CD4-positive, alpha-beta T cell (primary cell): ENCODE measurements at regions of chr17 and their contacts with region 1.

Region 1: DNA sequence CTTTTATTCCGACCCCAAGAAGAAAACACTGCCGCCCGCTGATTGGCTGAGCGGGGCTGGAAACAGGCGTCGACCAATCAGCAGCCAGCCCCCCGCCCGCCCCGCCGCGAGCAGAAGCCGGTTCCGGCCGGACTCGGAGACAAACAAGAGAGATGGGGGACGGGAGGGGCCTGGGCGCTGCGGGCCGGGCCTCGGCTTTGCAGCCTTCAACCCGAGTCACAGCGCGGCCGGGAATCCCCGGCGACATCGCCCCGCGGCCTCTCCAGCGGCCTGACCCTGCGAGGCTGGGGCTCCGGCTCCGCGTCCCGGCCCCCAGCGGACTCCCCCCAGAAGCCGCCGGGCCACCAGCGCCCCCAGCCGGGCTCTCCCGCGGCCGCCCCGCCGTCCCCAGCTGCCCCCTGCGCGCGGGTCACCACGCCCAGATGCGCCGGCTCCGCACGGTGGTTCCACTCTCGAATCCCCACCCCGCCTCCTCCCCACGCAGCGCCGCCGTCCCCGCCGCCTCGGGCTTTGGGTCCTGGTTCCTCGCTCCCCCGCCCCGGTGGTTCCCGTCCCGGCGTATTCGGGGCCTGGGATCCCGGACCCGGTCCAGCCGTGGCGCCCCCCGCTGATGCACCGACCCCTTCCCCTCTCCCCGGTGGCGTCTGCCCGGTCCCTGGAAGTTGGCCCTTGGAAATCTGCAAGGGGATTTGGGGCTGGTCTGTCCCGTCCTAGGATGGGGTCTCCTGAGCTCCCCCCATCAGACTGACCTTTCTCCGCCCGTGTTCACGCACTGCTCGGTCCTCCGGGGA is 417 bp upstream of the SLC43A2 start:
- DNase-seq: peak; percentile 76 to 94 (median 87)
- ATAC-seq: peak; percentile 75
- H3K4me3 ChIP-seq: peak overlapping the region; percentile 76
- H3K4me3 Mint-ChIP-seq: peak overlapping the region; percentile 96
- H3K27ac ChIP-seq: peak overlapping the region in 1 of 2 donors; percentile 46
- H3K27ac Mint-ChIP-seq: peak overlapping the region; percentile 77
- H3K4me1 ChIP-seq: peaks cover 34% of the 10 kb centered on the region
- H3K4me1 Mint-ChIP-seq: peaks cover 23% of the 10 kb centered on the region
- H3K27me3 ChIP-seq: peaks cover 0 to 5% of the 10 kb centered on the region in 2 experiments
- H3K27me3 Mint-ChIP-seq: no peaks in the 10 kb centered on the region
- CTCF ChIP-seq: no peak

Region 2: GRCh38 chr17:1275962-1276736 is 352.9 kb before region 1 on chr17:
- CTCF ChIA-PET with region 1: no interaction called
- POLR2A ChIA-PET with region 1: no interaction called
- intact Hi-C with region 1: loop called in 1 of 2 experiments (anchors 5 kb)
- DNase-seq: peak; percentile 58 to 86 (median 70)
- ATAC-seq: peak; percentile 76
- H3K4me3 ChIP-seq: no peak overlapping the region
- H3K4me3 Mint-ChIP-seq: no peak overlapping the region
- H3K27ac ChIP-seq: no peak overlapping the region
- H3K27ac Mint-ChIP-seq: no peak overlapping the region
- H3K4me1 ChIP-seq: peaks cover 8% of the 10 kb centered on the region
- H3K4me1 Mint-ChIP-seq: no peaks in the 10 kb centered on the region
- H3K27me3 ChIP-seq: peaks cover 13 to 15% of the 10 kb centered on the region in 2 experiments
- H3K27me3 Mint-ChIP-seq: peaks cover 35% of the 10 kb centered on the region
- CTCF ChIP-seq: peak; percentile 85

Region 3: DNA sequence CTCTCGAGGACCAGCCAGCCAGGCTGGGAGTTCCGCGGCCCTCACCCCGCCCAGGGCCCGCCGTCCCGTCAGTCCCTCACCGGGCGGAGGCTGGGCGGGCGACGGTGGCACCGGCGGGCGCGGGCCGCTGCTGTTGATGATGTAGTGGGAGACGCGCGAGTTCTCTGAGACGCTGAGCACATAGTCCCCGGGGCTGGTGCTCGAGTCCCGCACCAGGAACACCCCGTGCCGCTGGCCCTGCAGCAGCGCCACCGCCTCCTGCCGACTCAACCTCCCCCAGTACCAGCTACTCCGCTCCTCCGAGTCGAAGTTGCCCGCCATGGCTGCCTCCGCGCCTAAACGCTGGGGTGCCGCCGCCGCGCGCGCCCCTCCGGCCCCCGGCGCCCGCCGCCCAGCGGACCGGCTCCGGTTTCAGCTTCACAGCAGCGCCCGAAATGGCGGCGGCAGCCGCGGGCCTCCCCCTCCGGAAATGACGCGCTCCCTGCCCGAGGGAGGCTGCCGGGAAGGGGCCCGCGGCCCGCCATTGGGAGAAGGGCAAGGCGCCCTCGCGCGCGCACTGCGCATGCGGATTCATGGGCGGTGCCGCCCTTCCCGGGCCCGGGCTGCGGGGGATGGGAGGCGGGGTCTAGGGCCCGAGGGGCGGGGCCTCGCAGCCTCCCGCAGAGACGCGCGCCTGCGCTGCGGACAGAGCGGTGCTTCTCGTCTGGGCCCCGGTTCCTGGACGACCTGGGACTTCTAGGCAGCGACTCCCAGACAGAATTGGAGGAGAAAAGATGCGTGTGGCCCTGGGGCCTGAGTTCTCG is 173.1 kb before region 1 on chr17 and contains the start of gene CRK:
- CTCF ChIA-PET with region 1: no interaction called
- POLR2A ChIA-PET with region 1: interaction called, 3 read pairs
- intact Hi-C with region 1: loop called in 1 of 2 experiments (anchors 10 kb)
- DNase-seq: peak; percentile 95 to 99 (median 99)
- ATAC-seq: peak; percentile 91
- H3K4me3 ChIP-seq: peak within 1 kb of the TSS; percentile 80
- H3K4me3 Mint-ChIP-seq: peak within 1 kb of the TSS; percentile 96
- H3K27ac ChIP-seq: peak within 1 kb of the TSS; percentile 88 to 91
- H3K27ac Mint-ChIP-seq: peak within 1 kb of the TSS; percentile 81
- H3K4me1 ChIP-seq: peaks cover 54% of the 10 kb centered on the region
- H3K4me1 Mint-ChIP-seq: peaks cover 51% of the 10 kb centered on the region
- H3K27me3 ChIP-seq: no peaks in the 10 kb centered on the region
- H3K27me3 Mint-ChIP-seq: no peaks in the 10 kb centered on the region
- CTCF ChIP-seq: no peak
- total RNA-seq, gene CRK: 13.6 to 14.5 TPM

Region 4: GRCh38 chr17:1509290-1509881 is 119.7 kb before region 1 on chr17:
- CTCF ChIA-PET with region 1: no interaction called
- POLR2A ChIA-PET with region 1: no interaction called
- intact Hi-C with region 1: no loop called
- DNase-seq: no peak
- ATAC-seq: no peak
- H3K4me3 ChIP-seq: no peak overlapping the region
- H3K4me3 Mint-ChIP-seq: no peak overlapping the region
- H3K27ac ChIP-seq: no peak overlapping the region
- H3K27ac Mint-ChIP-seq: no peak overlapping the region
- H3K4me1 ChIP-seq: peaks cover 16% of the 10 kb centered on the region
- H3K4me1 Mint-ChIP-seq: peaks cover 15% of the 10 kb centered on the region
- H3K27me3 ChIP-seq: no peaks in the 10 kb centered on the region
- H3K27me3 Mint-ChIP-seq: no peaks in the 10 kb centered on the region
- CTCF ChIP-seq: no peak

Region 5: DNA sequence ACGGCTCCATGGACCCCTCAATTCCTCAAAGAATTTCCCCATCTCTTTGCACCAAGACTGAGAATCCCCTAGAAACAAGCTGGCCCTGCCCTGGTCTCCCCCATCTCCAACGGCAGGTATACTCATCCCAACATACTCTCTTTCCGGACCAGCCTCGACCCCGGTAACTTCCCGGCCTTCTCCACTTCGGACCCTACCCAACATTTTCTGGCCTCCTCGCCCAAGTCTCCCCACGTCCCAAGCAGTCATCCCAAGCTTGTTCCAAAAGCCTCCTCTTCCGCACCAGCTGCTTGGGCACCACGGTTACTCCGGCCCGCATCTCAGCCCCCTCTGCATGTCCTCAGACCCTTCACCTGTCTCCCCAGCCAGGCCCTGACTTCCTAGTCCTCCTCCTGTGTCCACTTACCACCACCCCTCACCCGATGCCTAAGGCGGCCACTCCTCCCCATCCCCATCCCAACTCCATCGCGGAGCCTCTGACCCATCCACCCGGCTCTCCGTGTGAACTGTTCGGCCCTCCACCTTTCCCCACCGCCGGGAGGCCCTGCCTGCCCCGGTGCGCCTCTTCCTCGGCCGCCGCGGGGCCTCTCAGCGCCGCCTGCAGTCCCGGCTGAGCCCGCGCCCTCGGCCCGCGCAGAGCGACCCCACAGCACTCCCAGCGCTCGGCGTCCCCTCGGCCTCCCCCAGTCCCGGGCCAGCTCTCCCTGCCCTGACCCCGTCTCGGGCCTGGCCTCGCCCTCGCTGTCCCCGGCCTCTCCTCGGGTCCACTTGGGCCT is 67.5 kb before region 1 on chr17:
- CTCF ChIA-PET with region 1: interaction called, 3 read pairs
- POLR2A ChIA-PET with region 1: interaction called, 4 read pairs
- intact Hi-C with region 1: loop called (anchors 2 to 10 kb)
- DNase-seq: peak in 11 of 14 experiments; percentile 14 to 68 (median 33)
- ATAC-seq: peak; percentile 40
- H3K4me3 ChIP-seq: peak overlapping the region; percentile 51
- H3K4me3 Mint-ChIP-seq: peak overlapping the region; percentile 88
- H3K27ac ChIP-seq: no peak overlapping the region
- H3K27ac Mint-ChIP-seq: peak overlapping the region; percentile 65
- H3K4me1 ChIP-seq: peaks cover 41% of the 10 kb centered on the region
- H3K4me1 Mint-ChIP-seq: peaks cover 37% of the 10 kb centered on the region
- H3K27me3 ChIP-seq: no peaks in the 10 kb centered on the region
- H3K27me3 Mint-ChIP-seq: no peaks in the 10 kb centered on the region
- CTCF ChIP-seq: peak; percentile 23

Region 6: DNA sequence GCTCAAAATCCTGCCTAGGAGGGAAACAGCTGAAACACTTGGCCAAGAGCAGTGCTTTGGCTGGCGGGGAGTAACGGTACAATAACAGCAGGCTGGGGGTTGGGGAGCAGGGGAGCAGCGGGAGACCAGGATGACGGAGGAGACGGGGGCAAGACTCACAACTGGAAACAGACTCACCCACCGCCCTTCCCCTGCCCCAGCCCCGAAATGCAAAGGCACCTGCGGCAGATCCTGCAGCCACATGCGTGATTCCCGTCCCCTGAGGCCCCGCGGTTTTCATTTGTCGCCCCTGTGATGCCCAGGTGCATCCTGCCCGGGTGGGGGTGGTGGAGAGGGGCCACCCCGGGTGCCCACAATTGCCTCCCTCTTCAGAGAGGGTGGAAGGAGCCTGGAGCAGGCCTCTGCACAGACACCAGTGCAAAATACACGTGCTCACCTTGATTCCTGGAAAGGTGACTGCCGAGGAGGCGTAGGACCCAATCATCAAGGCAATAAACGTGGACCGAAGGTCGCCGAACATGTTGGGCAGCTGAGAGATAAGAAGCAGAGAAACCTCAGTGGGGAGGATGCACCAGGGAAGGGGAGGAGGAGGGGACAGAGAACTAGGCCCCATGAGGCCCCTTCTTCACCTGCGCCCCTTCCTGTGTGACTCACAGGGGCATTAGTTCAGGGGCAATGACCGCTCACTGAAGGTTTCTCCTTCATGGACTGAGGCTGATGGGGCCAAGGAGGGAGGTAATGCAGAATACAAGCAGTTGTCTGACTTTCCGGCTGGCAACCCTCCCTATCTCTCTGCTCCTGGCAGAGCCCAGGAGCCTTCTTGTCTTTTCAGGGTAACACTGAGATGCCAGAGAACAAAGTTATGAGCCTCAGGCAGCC is 36.1 kb before region 1 on chr17:
- CTCF ChIA-PET with region 1: no interaction called
- POLR2A ChIA-PET with region 1: no interaction called
- intact Hi-C with region 1: no loop called
- DNase-seq: peak in 1 of 14 experiments; percentile 25
- ATAC-seq: no peak
- H3K4me3 ChIP-seq: no peak overlapping the region
- H3K4me3 Mint-ChIP-seq: no peak overlapping the region
- H3K27ac ChIP-seq: no peak overlapping the region
- H3K27ac Mint-ChIP-seq: no peak overlapping the region
- H3K4me1 ChIP-seq: peaks cover 4% of the 10 kb centered on the region
- H3K4me1 Mint-ChIP-seq: no peaks in the 10 kb centered on the region
- H3K27me3 ChIP-seq: no peaks in the 10 kb centered on the region
- H3K27me3 Mint-ChIP-seq: no peaks in the 10 kb centered on the region
- CTCF ChIP-seq: no peak

Region 7: DNA sequence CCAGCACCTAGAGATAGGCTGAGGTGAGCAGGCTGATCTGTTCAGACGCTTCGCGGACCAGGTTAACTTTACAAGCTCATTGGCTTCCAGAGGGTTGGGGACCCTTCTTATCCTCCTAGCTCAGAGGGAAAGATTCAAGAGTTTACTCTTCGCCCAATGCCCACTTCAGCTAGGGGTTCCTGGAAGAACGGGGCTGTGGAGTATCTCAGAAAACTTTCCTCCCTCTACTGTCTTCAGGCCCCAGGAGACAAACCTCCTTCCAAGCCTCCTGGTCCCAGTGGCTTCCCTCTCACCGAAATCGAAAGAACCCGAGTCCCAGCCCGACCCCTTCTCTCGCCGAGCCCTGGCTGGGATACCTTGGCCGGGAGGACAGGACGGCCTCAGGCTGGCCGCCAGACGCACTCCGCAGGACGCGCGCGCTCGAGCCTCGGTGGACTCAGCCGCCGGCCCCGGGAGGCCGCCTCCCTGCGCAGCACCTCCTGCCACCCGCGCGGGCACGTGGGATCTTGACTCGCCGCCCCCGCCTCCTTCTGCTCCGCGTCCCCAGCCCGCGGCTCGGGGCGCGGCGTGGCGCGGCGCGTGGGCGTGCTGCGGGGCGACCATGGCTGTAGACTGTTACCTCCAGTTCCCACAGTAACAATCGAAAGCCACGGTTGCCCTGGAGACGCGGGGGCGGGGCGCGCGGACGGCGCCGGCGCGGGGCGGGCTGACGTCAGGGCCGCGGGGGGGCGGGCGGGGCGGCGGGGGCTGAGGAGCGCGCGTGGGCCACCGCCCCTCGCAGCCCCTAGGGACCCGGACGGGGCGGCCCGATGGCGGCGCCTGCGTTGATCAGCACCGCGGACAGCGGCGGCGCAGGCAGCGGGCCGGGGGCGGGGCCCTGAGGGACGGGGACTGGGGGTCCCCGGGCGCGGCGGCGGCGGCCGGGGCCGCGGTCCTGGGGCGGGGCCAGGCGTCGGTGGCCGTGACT is 420.6 kb after region 1 on chr17:
- CTCF ChIA-PET with region 1: no interaction called
- POLR2A ChIA-PET with region 1: no interaction called
- intact Hi-C with region 1: loop called in 1 of 2 experiments (anchors 2 kb)
- DNase-seq: peak; percentile 84 to 95 (median 89)
- ATAC-seq: peak; percentile 66
- H3K4me3 ChIP-seq: peak overlapping the region; percentile 58
- H3K4me3 Mint-ChIP-seq: peak overlapping the region; percentile 78
- H3K27ac ChIP-seq: no peak overlapping the region
- H3K27ac Mint-ChIP-seq: peak overlapping the region; percentile 64
- H3K4me1 ChIP-seq: peaks cover 48% of the 10 kb centered on the region
- H3K4me1 Mint-ChIP-seq: peaks cover 33% of the 10 kb centered on the region
- H3K27me3 ChIP-seq: peaks cover 3 to 11% of the 10 kb centered on the region in 2 experiments
- H3K27me3 Mint-ChIP-seq: peaks cover 11% of the 10 kb centered on the region
- CTCF ChIP-seq: no peak